Activated CD8-positive, alpha-beta T cell treated with anti-CD3 and anti-CD28 coated beads for 36 hours (primary cell): ENCODE measurements at regions of chr7 and their contacts with region 1.

Region 1: DNA sequence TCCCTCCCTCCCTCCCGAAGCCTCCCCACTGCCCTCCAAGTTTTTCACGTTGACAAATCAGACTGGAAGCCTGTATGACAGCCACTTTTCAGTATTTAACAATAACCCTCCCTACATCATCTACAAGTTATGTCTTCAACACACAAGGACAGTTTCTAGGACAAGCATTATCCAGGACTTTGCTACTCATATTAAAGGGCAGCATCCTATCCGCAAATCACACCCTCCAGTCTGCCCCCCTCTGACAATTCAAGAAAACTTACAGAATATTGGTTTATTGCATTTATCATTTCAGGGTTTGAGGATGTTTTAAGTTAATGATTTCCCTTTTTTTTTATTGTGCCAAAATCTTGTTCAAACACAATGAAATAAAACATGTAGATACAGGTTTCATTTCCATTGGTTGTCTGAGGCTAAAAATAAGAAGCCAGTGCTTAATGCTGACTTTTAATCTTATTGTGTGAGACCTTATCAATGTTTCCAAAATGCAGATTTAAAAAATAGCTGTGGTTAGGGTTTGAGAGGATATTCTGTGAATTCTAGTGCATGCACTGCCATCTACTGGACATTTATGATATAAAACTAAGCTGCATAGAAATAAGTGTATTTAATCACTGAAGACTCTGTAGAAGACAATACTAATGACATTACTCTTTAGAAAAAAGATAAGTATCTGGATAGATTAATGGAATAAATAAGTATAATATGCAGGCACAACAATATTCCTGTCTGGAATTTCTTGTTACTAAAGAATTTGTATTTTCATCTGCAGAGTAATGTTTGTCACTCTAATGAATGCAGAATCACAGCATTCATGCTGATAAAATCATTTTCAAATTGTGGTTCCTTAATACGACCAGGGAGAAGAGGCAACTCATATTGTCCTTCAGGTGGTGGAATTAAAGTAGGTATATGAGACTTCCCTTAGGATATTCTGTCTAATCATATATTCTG is 64.1 kb downstream of the CAV1 start:
- DNase-seq: no peak
- ATAC-seq: peak; percentile 21
- H3K4me3 Mint-ChIP-seq: no peak overlapping the region
- H3K27ac Mint-ChIP-seq: peak overlapping the region; percentile 61
- H3K4me1 Mint-ChIP-seq: peaks cover 26% of the 10 kb centered on the region
- H3K27me3 Mint-ChIP-seq: peaks cover 22% of the 10 kb centered on the region
- CTCF ChIP-seq: peak; percentile 85

Region 2: DNA sequence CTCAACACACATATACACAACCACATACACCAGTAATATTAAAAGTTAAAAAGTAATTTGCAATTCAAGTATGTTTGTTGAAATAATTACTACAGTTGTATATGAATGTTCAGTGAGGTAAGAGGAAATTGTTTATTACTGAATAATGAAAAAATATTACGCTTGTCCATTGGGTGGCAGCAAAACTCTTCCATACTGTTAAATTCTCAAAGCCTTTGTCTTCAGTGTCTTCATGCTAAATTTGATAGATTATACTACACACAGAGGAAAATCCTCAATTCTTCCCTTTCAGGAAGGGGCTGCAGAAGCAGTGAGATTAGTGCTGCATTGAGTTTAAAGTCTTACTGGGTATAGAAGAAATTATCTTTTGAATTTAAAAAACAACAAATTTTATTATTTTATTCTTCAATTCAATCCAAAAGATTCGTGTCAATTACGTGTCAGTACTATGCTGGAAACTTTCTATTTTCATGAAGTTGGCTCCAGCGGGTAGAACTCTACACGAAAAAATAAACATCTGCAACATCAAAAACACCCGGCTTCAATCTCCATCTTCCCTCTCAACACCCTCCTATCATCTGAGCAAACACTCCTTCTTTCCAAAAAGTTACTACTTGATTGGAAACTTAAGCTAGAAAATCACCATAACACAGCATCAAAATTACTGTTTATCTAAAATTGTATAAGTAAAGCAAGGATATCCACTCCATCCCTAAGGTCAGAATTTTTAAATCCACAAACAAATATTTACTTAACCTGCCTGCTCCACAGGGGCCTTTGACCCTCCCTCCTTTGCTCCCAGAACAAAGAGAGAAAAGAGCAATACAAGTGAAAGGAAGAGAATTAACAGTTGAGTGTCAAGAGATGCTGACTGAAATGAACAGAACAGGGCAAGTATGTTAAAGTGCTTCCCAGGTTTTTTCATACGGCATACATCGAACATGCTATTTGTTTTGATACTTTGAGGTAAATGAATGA is 415.6 kb before region 1 on chr7:
- CTCF ChIA-PET with region 1: interaction called, 34 read pairs
- POLR2A ChIA-PET with region 1: no interaction called
- intact Hi-C with region 1: loop called (anchors 2 kb)
- DNase-seq: peak; percentile 27
- ATAC-seq: no peak
- H3K4me3 Mint-ChIP-seq: no peak overlapping the region
- H3K27ac Mint-ChIP-seq: no peak overlapping the region
- H3K4me1 Mint-ChIP-seq: no peaks in the 10 kb centered on the region
- H3K27me3 Mint-ChIP-seq: peaks cover 3% of the 10 kb centered on the region
- CTCF ChIP-seq: peak; percentile 76

Region 3: DNA sequence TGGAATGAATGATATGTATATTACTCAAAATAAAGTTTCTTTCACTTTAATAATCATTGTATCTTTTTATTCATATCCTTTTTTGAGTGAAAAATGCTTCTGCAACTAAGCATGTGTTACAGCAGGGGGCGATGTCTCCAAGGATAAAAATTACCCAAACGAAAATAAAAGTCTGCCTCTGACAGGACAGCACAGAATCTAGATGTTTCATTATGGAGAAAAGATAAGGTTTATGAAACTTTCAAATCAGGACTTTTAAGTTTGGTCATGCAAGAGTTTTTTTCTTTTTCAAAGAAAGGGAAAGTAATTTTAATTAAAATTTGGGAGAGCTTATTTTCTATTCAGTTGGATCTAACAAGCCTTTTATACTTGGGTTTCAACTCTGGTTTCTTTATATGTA is 330.2 kb before region 1 on chr7:
- CTCF ChIA-PET with region 1: interaction called, 53 read pairs
- POLR2A ChIA-PET with region 1: interaction called, 4 read pairs
- intact Hi-C with region 1: loop called (anchors 1 kb)
- DNase-seq: peak; percentile 44
- ATAC-seq: peak; percentile 42
- H3K4me3 Mint-ChIP-seq: no peak overlapping the region
- H3K27ac Mint-ChIP-seq: no peak overlapping the region
- H3K4me1 Mint-ChIP-seq: peaks cover 6% of the 10 kb centered on the region
- H3K27me3 Mint-ChIP-seq: no peaks in the 10 kb centered on the region
- CTCF ChIP-seq: peak; percentile 81

Region 4: GRCh38 chr7:116327752-116328151 is 261.2 kb before region 1 on chr7:
- CTCF ChIA-PET with region 1: no interaction called
- POLR2A ChIA-PET with region 1: no interaction called
- intact Hi-C with region 1: no loop called
- DNase-seq: no peak
- ATAC-seq: no peak
- H3K4me3 Mint-ChIP-seq: no peak overlapping the region
- H3K27ac Mint-ChIP-seq: no peak overlapping the region
- H3K4me1 Mint-ChIP-seq: no peaks in the 10 kb centered on the region
- H3K27me3 Mint-ChIP-seq: peaks cover 11% of the 10 kb centered on the region
- CTCF ChIP-seq: no peak

Region 5: GRCh38 chr7:116525913-116526861 is 62.7 kb before region 1 on chr7:
- CTCF ChIA-PET with region 1: interaction called, 15 read pairs
- POLR2A ChIA-PET with region 1: interaction called, 3 read pairs
- intact Hi-C with region 1: loop called (anchors 5 kb)
- DNase-seq: peak; percentile 72
- ATAC-seq: peak; percentile 93
- H3K4me3 Mint-ChIP-seq: peak overlapping the region; percentile 75
- H3K27ac Mint-ChIP-seq: peak overlapping the region; percentile 49
- H3K4me1 Mint-ChIP-seq: peaks cover 25% of the 10 kb centered on the region
- H3K27me3 Mint-ChIP-seq: peaks cover 71% of the 10 kb centered on the region
- CTCF ChIP-seq: peak; percentile 87

Region 6: GRCh38 chr7:116601426-116601825 is 12.5 kb after region 1 on chr7:
- CTCF ChIA-PET with region 1: interaction called, 33 read pairs
- POLR2A ChIA-PET with region 1: interaction called, 3 read pairs
- intact Hi-C with region 1: no loop called
- DNase-seq: peak; percentile 51
- ATAC-seq: peak; percentile 68
- H3K4me3 Mint-ChIP-seq: no peak overlapping the region
- H3K27ac Mint-ChIP-seq: no peak overlapping the region
- H3K4me1 Mint-ChIP-seq: peaks cover 10% of the 10 kb centered on the region
- H3K27me3 Mint-ChIP-seq: peaks cover 10% of the 10 kb centered on the region
- CTCF ChIP-seq: no peak

Region 7: GRCh38 chr7:116809636-116810266 is 220.8 kb after region 1 on chr7:
- CTCF ChIA-PET with region 1: interaction called, 16 read pairs
- POLR2A ChIA-PET with region 1: no interaction called
- intact Hi-C with region 1: loop called (anchors 2 kb)
- DNase-seq: peak; percentile 13
- ATAC-seq: no peak
- H3K4me3 Mint-ChIP-seq: no peak overlapping the region
- H3K27ac Mint-ChIP-seq: no peak overlapping the region
- H3K4me1 Mint-ChIP-seq: no peaks in the 10 kb centered on the region
- H3K27me3 Mint-ChIP-seq: peaks cover 5% of the 10 kb centered on the region
- CTCF ChIP-seq: peak; percentile 72